CD8-positive, alpha-beta T cell (primary cell): ENCODE measurements at regions of chr13 and their contacts with region 1.

Region 1: DNA sequence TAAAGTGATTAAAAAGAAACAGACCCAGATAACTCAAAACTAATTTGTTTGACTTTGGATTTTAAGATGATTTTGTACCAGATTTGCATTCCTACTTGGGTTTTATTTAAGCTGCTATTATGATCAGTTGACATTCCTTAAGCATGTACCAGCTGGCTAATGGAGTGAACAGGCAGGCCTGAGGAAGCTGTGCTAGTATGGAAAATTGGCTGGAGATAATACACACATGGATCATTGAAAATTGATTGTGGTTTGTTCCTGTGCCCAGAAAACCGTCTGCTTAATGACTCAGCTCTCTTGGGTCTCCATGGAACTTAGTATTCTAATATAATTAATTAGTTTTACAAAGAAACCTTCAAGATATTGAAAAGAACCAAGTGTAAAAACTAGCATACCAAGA is 22.6 kb downstream of the POLR1D start:
- DNase-seq: no peak
- ATAC-seq: no peak
- H3K4me3 ChIP-seq: no peak overlapping the region
- H3K4me3 Mint-ChIP-seq: no peak overlapping the region
- H3K27ac ChIP-seq: no peak overlapping the region
- H3K27ac Mint-ChIP-seq: no peak overlapping the region
- H3K4me1 ChIP-seq: no peaks in the 10 kb centered on the region
- H3K4me1 Mint-ChIP-seq: peaks cover 32% of the 10 kb centered on the region
- H3K27me3 ChIP-seq: no peaks in the 10 kb centered on the region
- H3K27me3 Mint-ChIP-seq: no peaks in the 10 kb centered on the region
- CTCF ChIP-seq: no peak

Region 2: DNA sequence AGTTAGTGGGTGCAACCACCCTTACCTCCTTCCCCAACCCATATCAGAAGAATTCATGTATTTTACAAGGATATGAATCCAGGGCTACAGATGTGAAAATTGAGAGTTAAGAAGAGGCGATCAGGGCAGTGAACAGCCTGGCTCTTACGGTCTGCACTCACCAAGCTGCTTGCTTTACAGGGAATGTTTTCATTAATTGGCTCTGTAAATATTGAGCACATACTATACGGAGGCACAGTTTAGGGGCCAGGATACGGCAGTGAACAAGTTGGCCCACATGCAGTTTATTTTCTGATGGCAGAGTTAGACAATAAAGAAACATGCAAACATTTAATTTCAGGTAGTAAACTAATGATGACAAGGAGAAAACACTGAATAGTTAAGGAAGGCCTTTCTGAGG is 16.2 kb before region 1 on chr13:
- CTCF ChIA-PET with region 1: interaction called, 3 read pairs
- POLR2A ChIA-PET with region 1: interaction called, 3 read pairs
- intact Hi-C with region 1: loop called in 1 of 2 experiments (anchors 1 kb)
- DNase-seq: no peak
- ATAC-seq: no peak
- H3K4me3 ChIP-seq: no peak overlapping the region
- H3K4me3 Mint-ChIP-seq: no peak overlapping the region
- H3K27ac ChIP-seq: no peak overlapping the region
- H3K27ac Mint-ChIP-seq: peak overlapping the region; percentile 1
- H3K4me1 ChIP-seq: peaks cover 10% of the 10 kb centered on the region
- H3K4me1 Mint-ChIP-seq: peaks cover 75% of the 10 kb centered on the region
- H3K27me3 ChIP-seq: no peaks in the 10 kb centered on the region
- H3K27me3 Mint-ChIP-seq: no peaks in the 10 kb centered on the region
- CTCF ChIP-seq: no peak